PC-9 (cell line): ENCODE measurements at regions of chr19 and their contacts with region 1.

Region 1: GRCh38 chr19:1942078-1942933 is 1.3 kb downstream of the CSNK1G2 start:
- DNase-seq: peak in 1 of 2 experiments; percentile 61
- H3K4me3 ChIP-seq: peak overlapping the region; percentile 81
- H3K27ac ChIP-seq: 0 out of 2 replicates have a peak overlapping the region, but pooled peaks have one; percentile 47
- H3K4me1 ChIP-seq: peaks cover 6% of the 10 kb centered on the region; the same call in 1 of the 2 replicates
- H3K27me3 ChIP-seq: no peaks in the 10 kb centered on the region
- CTCF ChIP-seq: no peak

Region 2: GRCh38 chr19:1980091-1980808 is 37.9 kb after region 1 on chr19:
- CTCF ChIA-PET with region 1: interaction called, 12 read pairs
- POLR2A ChIA-PET with region 1: no interaction called
- intact Hi-C with region 1: no loop called
- DNase-seq: no peak
- H3K4me3 ChIP-seq: no peak overlapping the region
- H3K27ac ChIP-seq: no peak overlapping the region
- H3K4me1 ChIP-seq: no peaks in the 10 kb centered on the region
- H3K27me3 ChIP-seq: no peaks in the 10 kb centered on the region
- CTCF ChIP-seq: no peak